Mammary epithelial cell (primary cell): ENCODE measurements at regions of chr7 and their contacts with region 1.

Region 1: GRCh38 chr7:10412422-10413019 is 561.2 kb upstream of the PHF14 start:
- DNase-seq: peak; percentile 11
- H3K4me3 ChIP-seq: no peak overlapping the region
- H3K27ac ChIP-seq: no peak overlapping the region
- H3K4me1 ChIP-seq: no peaks in the 10 kb centered on the region
- H3K27me3 ChIP-seq: no peaks in the 10 kb centered on the region
- CTCF ChIP-seq: peak; percentile 56 to 65

Region 2: DNA sequence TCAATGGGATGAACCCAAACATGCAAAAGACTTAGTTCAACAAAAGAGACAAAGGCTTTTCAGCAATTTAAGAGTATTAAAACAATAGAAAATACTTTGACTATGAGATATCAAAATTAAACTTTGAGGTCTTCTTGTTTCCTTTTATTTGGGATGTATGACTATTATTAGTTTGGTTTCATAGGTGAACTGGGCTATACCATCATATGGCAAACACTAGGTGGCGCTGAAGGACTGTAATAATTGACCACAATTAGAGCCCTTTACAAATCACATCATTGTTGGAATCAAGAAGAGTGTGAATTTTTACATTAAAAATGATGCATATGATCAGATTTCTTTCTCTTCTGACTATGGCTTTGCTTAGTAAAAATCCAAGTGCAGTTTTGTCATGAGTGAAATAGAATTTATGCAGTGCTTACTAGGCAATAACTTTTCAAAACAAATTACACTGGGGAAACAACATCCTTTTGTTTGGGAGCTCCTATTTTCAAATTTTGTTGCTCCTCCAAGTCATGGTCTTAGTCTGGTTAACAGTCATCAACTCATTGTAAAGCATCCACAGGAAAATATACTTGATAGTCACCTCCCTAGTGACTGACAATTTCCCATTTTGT is 1993.8 kb before region 1 on chr7:
- CTCF ChIA-PET with region 1: no interaction called
- dilution Hi-C with region 1: no loop called
- in situ Hi-C with region 1: no loop called
- intact Hi-C with region 1: loop called (anchors 1 kb)
- DNase-seq: peak; percentile 30
- H3K4me3 ChIP-seq: no peak overlapping the region
- H3K27ac ChIP-seq: no peak overlapping the region
- H3K4me1 ChIP-seq: no peaks in the 10 kb centered on the region
- H3K27me3 ChIP-seq: no peaks in the 10 kb centered on the region
- CTCF ChIP-seq: peak; percentile 78